Heart left ventricle (tissue), 16 donors: ENCODE measurements at regions of chr7 and their contacts with region 1.

Region 1: GRCh38 chr7:118214051-118214832 is 10.3 kb upstream of the ANKRD7 start:
- DNase-seq: peak; percentile 53 to 85 (median 76)
- ATAC-seq: peak; percentile 71 to 97 (median 90)
- H3K4me3 ChIP-seq: peak overlapping the region; percentile 30 to 69 (median 52)
- H3K27ac ChIP-seq: peak overlapping the region in 3 of 12 donors; percentile 6 to 48 (median 14)
- H3K4me1 ChIP-seq: peaks cover 0 to 10% (median 0%) of the 10 kb centered on the region in 12 donors
- H3K27me3 ChIP-seq: peaks cover 0 to 10% (median 0%) of the 10 kb centered on the region in 9 donors
- CTCF ChIP-seq: no peak
- POLR2A ChIP-seq: no peak

Region 2: GRCh38 chr7:117639966-117640365 is 574.3 kb before region 1 on chr7:
- intact Hi-C with region 1: no loop called
- DNase-seq: no peak
- ATAC-seq: no peak
- H3K4me3 ChIP-seq: no peak overlapping the region
- H3K27ac ChIP-seq: no peak overlapping the region
- H3K4me1 ChIP-seq: peaks cover 0 to 3% (median 0%) of the 10 kb centered on the region in 12 donors
- H3K27me3 ChIP-seq: no peaks in the 10 kb centered on the region
- CTCF ChIP-seq: no peak
- POLR2A ChIP-seq: no peak

Region 3: GRCh38 chr7:118153551-118154177 is 60.6 kb before region 1 on chr7:
- intact Hi-C with region 1: loop called in 1 of 10 experiments (anchors 10 kb)
- DNase-seq: no peak
- ATAC-seq: no peak
- H3K4me3 ChIP-seq: no peak overlapping the region
- H3K27ac ChIP-seq: no peak overlapping the region
- H3K4me1 ChIP-seq: peaks cover 0 to 5% (median 0%) of the 10 kb centered on the region in 12 donors
- H3K27me3 ChIP-seq: peaks cover 0 to 4% (median 0%) of the 10 kb centered on the region in 9 donors
- CTCF ChIP-seq: peak; percentile 49 to 74 (median 64)
- POLR2A ChIP-seq: no peak

Region 4: GRCh38 chr7:118239014-118239413 is 24.8 kb after region 1 on chr7:
- intact Hi-C with region 1: no loop called
- DNase-seq: no peak
- ATAC-seq: no peak
- H3K4me3 ChIP-seq: no peak overlapping the region
- H3K27ac ChIP-seq: no peak overlapping the region
- H3K4me1 ChIP-seq: no peaks in the 10 kb centered on the region
- H3K27me3 ChIP-seq: no peaks in the 10 kb centered on the region
- CTCF ChIP-seq: no peak
- POLR2A ChIP-seq: no peak